Naive thymus-derived CD4-positive, alpha-beta T cell (primary cell): ENCODE measurements at regions of chr1 and their contacts with region 1.

Region 1: DNA sequence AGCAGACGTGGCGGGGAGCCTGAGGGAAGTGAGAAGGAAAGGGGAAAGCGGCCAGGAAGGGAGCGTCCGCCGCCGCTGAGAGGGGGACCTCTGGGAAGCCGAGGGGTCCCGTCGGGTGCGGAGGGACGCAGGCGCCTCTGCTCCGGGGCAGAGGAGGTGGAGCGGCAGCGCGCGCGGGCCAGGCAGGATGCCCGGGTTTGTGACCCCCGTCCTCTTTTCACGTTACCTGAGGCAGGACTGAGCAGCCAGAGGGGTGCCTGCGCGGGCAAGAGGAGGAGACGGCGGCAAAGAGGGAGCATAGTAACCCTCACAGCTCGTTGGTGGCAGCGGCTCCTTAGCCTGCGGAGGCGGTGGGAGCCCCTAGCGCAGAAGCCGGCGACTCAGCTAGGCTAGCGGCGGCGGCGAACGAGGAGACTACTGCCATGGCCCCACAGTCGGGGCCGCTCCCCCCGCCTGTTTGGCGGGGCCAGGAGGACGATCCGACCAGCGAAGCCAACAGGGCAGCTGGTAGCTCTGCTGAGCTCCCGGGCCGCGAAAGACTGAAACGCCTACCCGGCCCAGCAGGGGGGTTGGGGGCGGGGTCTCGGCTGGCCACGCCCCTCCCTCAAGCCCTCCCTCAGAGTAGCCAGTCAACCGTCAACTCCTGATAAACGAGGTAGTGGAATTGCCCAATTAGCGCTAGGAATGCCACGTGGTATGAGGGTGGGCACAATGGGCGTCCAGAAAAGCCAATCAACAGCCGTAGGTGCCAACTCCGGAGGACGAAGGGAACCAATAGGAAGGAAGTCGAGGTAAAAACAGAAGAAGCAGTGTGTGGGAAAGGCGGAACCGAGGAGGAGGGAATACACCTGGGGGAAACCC is at the start of gene TESK2:
- DNase-seq: peak; percentile 89 to 99 (median 98)
- ATAC-seq: peak; percentile 96
- H3K4me3 ChIP-seq: peak within 1 kb of the TSS; percentile 76
- H3K4me3 Mint-ChIP-seq: no peak within 1 kb of the TSS
- H3K27ac ChIP-seq: peak within 1 kb of the TSS; percentile 77
- H3K27ac Mint-ChIP-seq: no peak within 1 kb of the TSS
- H3K4me1 ChIP-seq: peaks cover 9% of the 10 kb centered on the region in 2 donors
- H3K4me1 Mint-ChIP-seq: peaks cover 5 to 15% (median 10%) of the 10 kb centered on the region in 7 donors
- H3K27me3 ChIP-seq: no peaks in the 10 kb centered on the region
- H3K27me3 Mint-ChIP-seq: peaks cover 0 to 4% (median 0%) of the 10 kb centered on the region in 5 donors
- total RNA-seq, gene TESK2: 3.3 to 8.9 (median 7.4) TPM

Region 2: DNA sequence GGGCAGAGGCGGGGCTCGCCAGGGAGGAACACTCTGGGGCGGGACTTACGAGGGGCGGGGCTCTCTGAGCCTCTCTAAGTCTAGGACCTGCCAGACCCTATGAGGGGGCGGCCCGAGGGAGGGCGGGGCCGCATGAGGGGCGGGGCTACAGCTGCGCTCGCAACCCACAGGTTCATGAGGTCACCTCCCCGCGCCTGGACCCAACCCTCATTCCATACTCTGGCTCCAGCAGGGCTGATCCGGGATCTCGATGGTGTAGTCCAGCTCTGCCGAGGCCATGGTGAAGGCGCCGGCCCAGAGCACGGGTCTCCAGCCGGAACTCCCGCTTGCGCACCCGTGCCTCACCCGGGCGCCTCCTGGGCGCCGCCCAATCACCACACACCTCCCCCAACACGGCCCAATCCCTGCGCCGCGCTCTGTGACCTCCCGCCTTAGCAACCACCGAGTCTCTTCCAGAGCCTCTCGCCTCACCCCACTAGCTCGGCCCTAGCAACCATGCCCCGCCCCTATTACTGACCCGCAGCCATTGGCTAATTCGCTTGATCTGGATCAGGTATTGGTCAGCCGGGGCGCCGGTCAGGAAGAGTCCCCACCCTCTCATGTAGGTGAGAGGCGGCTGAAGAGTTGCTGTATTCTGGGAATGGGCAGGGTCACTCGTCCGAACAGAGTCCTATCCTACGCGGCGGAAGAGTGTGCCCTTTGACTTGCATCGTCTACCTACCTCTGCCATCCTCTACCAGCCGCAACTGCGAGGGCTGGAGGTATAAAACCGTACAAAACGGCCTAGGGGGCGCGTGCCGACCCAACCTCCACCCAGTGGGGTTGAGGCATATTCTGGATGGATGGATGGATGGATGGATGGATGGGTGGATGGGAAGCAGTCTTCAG is 816.5 kb before region 1 on chr1 and contains the starts of genes ARMH1 and TMEM53:
- CTCF ChIA-PET with region 1: no interaction called
- POLR2A ChIA-PET with region 1: no interaction called
- intact Hi-C with region 1: loop called in 1 of 2 experiments (anchors 1 kb)
- DNase-seq: peak; percentile 91 to 96 (median 95)
- ATAC-seq: peak; percentile 94
- H3K4me3 ChIP-seq: peak within 1 kb of the TSS; percentile 81
- H3K4me3 Mint-ChIP-seq: peak within 1 kb of the TSS; percentile 83 to 94 (median 91)
- H3K27ac ChIP-seq: peak within 1 kb of the TSS; percentile 76
- H3K27ac Mint-ChIP-seq: peak within 1 kb of the TSS; percentile 84 to 94 (median 91)
- H3K4me1 ChIP-seq: peaks cover 0 to 6% of the 10 kb centered on the region in 2 donors
- H3K4me1 Mint-ChIP-seq: peaks cover 13 to 34% (median 23%) of the 10 kb centered on the region in 7 donors
- H3K27me3 ChIP-seq: no peaks in the 10 kb centered on the region
- H3K27me3 Mint-ChIP-seq: no peaks in the 10 kb centered on the region
- total RNA-seq, gene ARMH1: 65.8 to 205 (median 87.0) TPM
- total RNA-seq, gene TMEM53: 1.6 to 3.5 (median 1.9) TPM

Region 3: DNA sequence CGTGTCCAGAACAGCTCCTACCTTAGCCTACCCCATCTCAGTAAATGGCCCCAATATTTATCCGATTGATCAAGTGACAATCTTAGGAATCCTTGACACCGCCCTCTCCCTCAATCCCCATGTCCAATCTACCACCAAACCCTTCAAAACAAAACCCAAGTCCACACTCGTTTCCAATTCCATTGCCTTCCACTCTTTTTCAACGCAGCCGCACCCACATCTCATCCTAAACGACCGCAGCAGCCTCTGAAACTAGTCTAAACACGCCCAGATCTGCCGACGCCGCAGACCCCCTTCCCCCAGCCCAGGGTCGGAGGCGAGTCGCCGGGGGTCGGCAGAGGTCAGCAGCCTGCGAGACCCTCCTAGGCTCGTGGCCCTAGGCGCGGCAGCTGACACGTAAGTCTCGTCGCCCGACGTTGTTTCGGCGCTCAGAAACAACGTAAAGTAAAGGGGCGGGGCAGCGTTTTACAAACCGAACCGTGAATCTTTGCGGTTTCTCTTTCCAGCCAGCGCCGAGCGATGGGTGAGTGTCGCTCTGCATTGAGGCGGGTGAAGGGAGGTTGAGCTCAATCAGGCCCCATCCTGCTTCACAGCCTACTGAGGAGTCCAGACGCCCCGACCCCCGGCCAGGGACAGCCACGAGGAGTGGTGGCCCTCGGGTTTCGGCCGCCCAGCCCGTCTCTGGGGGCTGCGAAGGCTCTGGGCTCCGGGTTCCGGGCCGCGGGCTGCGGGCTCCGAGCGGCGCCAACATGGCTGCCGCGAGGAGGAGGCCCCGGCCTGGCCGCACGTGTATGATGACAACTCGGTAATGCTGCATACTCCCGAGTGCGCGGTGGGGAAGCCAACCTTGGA is 715.6 kb before region 1 on chr1 and contains the start of gene RPS8:
- CTCF ChIA-PET with region 1: interaction called, 4 read pairs
- POLR2A ChIA-PET with region 1: no interaction called
- intact Hi-C with region 1: loop called in 1 of 2 experiments (anchors 1 kb)
- DNase-seq: peak; percentile 77 to 92 (median 90)
- ATAC-seq: peak; percentile 91
- H3K4me3 ChIP-seq: peak within 1 kb of the TSS; percentile 99
- H3K4me3 Mint-ChIP-seq: peak within 1 kb of the TSS; percentile 88 to 99 (median 92)
- H3K27ac ChIP-seq: peak within 1 kb of the TSS; percentile 89
- H3K27ac Mint-ChIP-seq: peak within 1 kb of the TSS; percentile 91 to 98 (median 94)
- H3K4me1 ChIP-seq: peaks cover 6 to 19% of the 10 kb centered on the region in 2 donors
- H3K4me1 Mint-ChIP-seq: peaks cover 20 to 45% (median 38%) of the 10 kb centered on the region in 7 donors
- H3K27me3 ChIP-seq: no peaks in the 10 kb centered on the region
- H3K27me3 Mint-ChIP-seq: no peaks in the 10 kb centered on the region
- total RNA-seq, gene RPS8: 2,000 to 3,409 (median 3,025) TPM

Region 4: GRCh38 chr1:44985747-44986359 is 505.0 kb before region 1 on chr1:
- CTCF ChIA-PET with region 1: no interaction called
- POLR2A ChIA-PET with region 1: no interaction called
- intact Hi-C with region 1: loop called in 1 of 2 experiments (anchors 1 kb)
- DNase-seq: no peak
- ATAC-seq: no peak
- H3K4me3 ChIP-seq: peak overlapping the region; percentile 77
- H3K4me3 Mint-ChIP-seq: peak overlapping the region; percentile 90 to 100 (median 98)
- H3K27ac ChIP-seq: peak overlapping the region; percentile 68
- H3K27ac Mint-ChIP-seq: peak overlapping the region; percentile 75 to 99 (median 92)
- H3K4me1 ChIP-seq: peaks cover 8 to 13% of the 10 kb centered on the region in 2 donors
- H3K4me1 Mint-ChIP-seq: peaks cover 7 to 39% (median 23%) of the 10 kb centered on the region in 7 donors
- H3K27me3 ChIP-seq: no peaks in the 10 kb centered on the region
- H3K27me3 Mint-ChIP-seq: no peaks in the 10 kb centered on the region

Region 5: GRCh38 chr1:45303582-45304310 is 187.1 kb before region 1 on chr1:
- CTCF ChIA-PET with region 1: interaction called, 4 read pairs
- POLR2A ChIA-PET with region 1: interaction called, 13 read pairs
- intact Hi-C with region 1: loop called (anchors 1 kb)
- DNase-seq: peak; percentile 86 to 96 (median 93)
- ATAC-seq: peak; percentile 94
- H3K4me3 ChIP-seq: peak overlapping the region; percentile 95
- H3K4me3 Mint-ChIP-seq: peak overlapping the region; percentile 89 to 96 (median 92)
- H3K27ac ChIP-seq: peak overlapping the region; percentile 88
- H3K27ac Mint-ChIP-seq: peak overlapping the region; percentile 90 to 97 (median 95)
- H3K4me1 ChIP-seq: peaks cover 7 to 9% of the 10 kb centered on the region in 2 donors
- H3K4me1 Mint-ChIP-seq: peaks cover 6 to 32% (median 26%) of the 10 kb centered on the region in 7 donors
- H3K27me3 ChIP-seq: no peaks in the 10 kb centered on the region
- H3K27me3 Mint-ChIP-seq: no peaks in the 10 kb centered on the region

Region 6: GRCh38 chr1:45521398-45522323 is 30.8 kb after region 1 on chr1 and contains the start of gene PRDX1:
- CTCF ChIA-PET with region 1: interaction called, 5 read pairs
- POLR2A ChIA-PET with region 1: interaction called, 24 read pairs
- intact Hi-C with region 1: no loop called
- DNase-seq: peak; percentile 91 to 99 (median 93)
- ATAC-seq: peak; percentile 95
- H3K4me3 ChIP-seq: peak within 1 kb of the TSS; percentile 94
- H3K4me3 Mint-ChIP-seq: peak within 1 kb of the TSS; percentile 90 to 99 (median 94)
- H3K27ac ChIP-seq: peak within 1 kb of the TSS; percentile 87
- H3K27ac Mint-ChIP-seq: peak within 1 kb of the TSS; percentile 83 to 96 (median 91)
- H3K4me1 ChIP-seq: peaks cover 7 to 8% of the 10 kb centered on the region in 2 donors
- H3K4me1 Mint-ChIP-seq: peaks cover 14 to 56% (median 32%) of the 10 kb centered on the region in 7 donors
- H3K27me3 ChIP-seq: no peaks in the 10 kb centered on the region
- H3K27me3 Mint-ChIP-seq: peaks cover 0 to 12% (median 0%) of the 10 kb centered on the region in 5 donors
- total RNA-seq, gene PRDX1: 28.8 to 369 (median 96.3) TPM

Region 7: DNA sequence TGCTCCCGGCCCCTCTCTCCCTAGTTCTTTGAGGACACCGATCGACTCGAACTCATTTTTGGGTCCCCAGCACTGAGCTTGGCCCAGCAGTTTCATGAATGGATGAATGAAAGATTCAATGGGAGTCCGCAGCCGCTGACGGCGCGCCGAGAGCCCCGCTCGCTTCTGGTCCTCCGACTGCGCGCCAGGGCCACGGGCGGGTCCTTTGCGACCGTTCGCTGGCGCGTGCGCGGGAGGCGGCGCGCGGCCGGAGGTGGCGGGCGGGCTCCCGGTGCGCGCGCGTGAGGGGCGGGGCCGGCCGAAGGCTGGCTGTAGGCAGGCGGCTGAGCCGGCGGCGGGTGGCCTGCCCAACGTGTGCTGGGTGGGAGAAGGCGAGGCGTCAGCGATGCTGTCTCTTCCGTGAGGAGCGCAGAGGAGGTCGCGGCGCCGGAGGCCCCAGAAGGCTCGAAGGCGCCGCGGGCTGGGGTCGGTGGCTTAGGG is 312.5 kb after region 1 on chr1 and contains the start of gene MAST2:
- CTCF ChIA-PET with region 1: no interaction called
- POLR2A ChIA-PET with region 1: no interaction called
- intact Hi-C with region 1: loop called in 1 of 2 experiments (anchors 5 kb)
- DNase-seq: peak; percentile 53 to 95 (median 71)
- ATAC-seq: peak; percentile 98
- H3K4me3 ChIP-seq: peak within 1 kb of the TSS; percentile 65
- H3K4me3 Mint-ChIP-seq: peak within 1 kb of the TSS; percentile 87 to 100 (median 92)
- H3K27ac ChIP-seq: peak within 1 kb of the TSS; percentile 41
- H3K27ac Mint-ChIP-seq: peak within 1 kb of the TSS; percentile 10 to 87 (median 77)
- H3K4me1 ChIP-seq: peaks cover 0 to 7% of the 10 kb centered on the region in 2 donors
- H3K4me1 Mint-ChIP-seq: peaks cover 21 to 33% (median 26%) of the 10 kb centered on the region in 7 donors
- H3K27me3 ChIP-seq: no peaks in the 10 kb centered on the region
- H3K27me3 Mint-ChIP-seq: no peaks in the 10 kb centered on the region
- total RNA-seq, gene MAST2: 4.9 to 22.7 (median 7.1) TPM

Region 8: GRCh38 chr1:47340227-47340626 is 1849.4 kb after region 1 on chr1:
- CTCF ChIA-PET with region 1: no interaction called
- POLR2A ChIA-PET with region 1: no interaction called
- intact Hi-C with region 1: no loop called
- DNase-seq: no peak
- ATAC-seq: no peak
- H3K4me3 ChIP-seq: no peak overlapping the region
- H3K4me3 Mint-ChIP-seq: no peak overlapping the region
- H3K27ac ChIP-seq: no peak overlapping the region
- H3K27ac Mint-ChIP-seq: no peak overlapping the region
- H3K4me1 ChIP-seq: peaks cover 0 to 2% of the 10 kb centered on the region in 2 donors
- H3K4me1 Mint-ChIP-seq: peaks cover 13 to 46% (median 29%) of the 10 kb centered on the region in 7 donors
- H3K27me3 ChIP-seq: no peaks in the 10 kb centered on the region
- H3K27me3 Mint-ChIP-seq: no peaks in the 10 kb centered on the region